ENCODE measurements at regions of chr20 and their contacts with region 1.

Region 1: GRCh38 chr20:17892189-17892938 is 76.2 kb downstream of the SNX5 start:
- DNase-seq: no peak
- ATAC-seq: peak in 1 of 8 donors; percentile 25
- H3K4me3 ChIP-seq: no peak overlapping the region
- H3K27ac ChIP-seq: peak overlapping the region in 1 of 10 donors; percentile 24
- H3K4me1 ChIP-seq: peaks cover 6 to 49% (median 38%) of the 10 kb centered on the region in 9 donors
- H3K27me3 ChIP-seq: no peaks in the 10 kb centered on the region
- CTCF ChIP-seq: no peak

Region 2: DNA sequence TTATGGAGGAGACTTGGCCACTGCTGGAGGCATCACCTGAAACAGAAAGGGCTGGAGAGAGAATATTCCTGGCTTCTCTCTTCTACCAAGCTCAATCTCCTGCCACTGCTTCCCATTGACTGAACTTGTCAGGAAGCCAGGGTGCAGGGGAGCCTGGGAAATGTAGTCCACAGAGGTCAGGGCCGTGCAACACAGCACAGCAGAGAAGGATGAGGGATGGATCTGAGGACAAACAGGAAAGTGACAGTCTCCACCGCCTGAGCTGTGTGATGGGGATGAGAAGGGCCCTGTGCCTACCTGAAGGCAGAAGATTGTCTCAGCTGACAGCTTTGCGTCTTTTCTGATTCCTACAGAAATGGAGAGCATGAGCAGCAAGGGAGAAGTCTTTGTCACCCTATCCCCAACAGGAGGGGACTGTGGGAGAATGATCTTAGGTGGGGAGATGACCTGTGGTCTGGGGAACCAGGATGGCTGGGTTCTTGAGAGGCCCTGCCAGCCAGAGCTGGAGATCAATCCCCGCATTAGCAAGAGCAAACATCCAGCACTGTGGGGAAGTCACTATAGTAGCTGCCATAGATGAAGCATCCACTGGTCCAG is 38.0 kb before region 1 on chr20:
- intact Hi-C with region 1: loop called in 2 of 10 experiments (anchors 5 kb)
- DNase-seq: peak; percentile 56 to 77
- ATAC-seq: peak in 7 of 8 donors; percentile 32 to 66 (median 57)
- H3K4me3 ChIP-seq: no peak overlapping the region
- H3K27ac ChIP-seq: no peak overlapping the region
- H3K4me1 ChIP-seq: peaks cover 0 to 28% (median 17%) of the 10 kb centered on the region in 9 donors
- H3K27me3 ChIP-seq: no peaks in the 10 kb centered on the region
- CTCF ChIP-seq: no peak

Region 3: GRCh38 chr20:18077157-18077556 is 184.8 kb after region 1 on chr20:
- intact Hi-C with region 1: no loop called
- DNase-seq: no peak
- ATAC-seq: no peak
- H3K4me3 ChIP-seq: no peak overlapping the region
- H3K27ac ChIP-seq: no peak overlapping the region
- H3K4me1 ChIP-seq: no peaks in the 10 kb centered on the region
- H3K27me3 ChIP-seq: peaks cover 0 to 37% (median 20%) of the 10 kb centered on the region in 7 donors
- CTCF ChIP-seq: no peak